Transverse colon (tissue), 4 donors: ENCODE measurements at regions of chr18 and their contacts with region 1.

Region 1: DNA sequence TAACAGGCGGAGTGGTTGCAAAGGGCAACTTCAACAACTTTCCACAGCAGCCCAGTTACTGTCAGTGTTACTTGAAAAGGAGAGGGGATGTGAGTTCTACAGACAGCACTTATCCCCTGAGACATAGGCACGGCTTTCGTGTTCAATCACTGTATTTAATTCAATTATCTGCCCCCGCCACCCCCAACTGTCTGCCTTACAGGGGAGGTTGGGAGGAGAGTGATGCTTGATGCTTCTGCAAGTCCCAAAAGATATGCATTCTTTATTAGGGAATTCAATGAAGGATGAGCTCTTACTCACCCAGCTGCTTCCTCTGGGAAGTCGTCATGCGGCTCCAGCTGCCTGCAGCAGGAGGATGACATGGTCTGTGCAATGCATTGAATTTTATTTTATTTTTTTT is 639.9 kb downstream of the DCC start:
- DNase-seq: no peak
- H3K4me3 ChIP-seq: no peak overlapping the region
- H3K27ac ChIP-seq: no peak overlapping the region
- H3K4me1 ChIP-seq: no peaks in the 10 kb centered on the region
- H3K27me3 ChIP-seq: no peaks in the 10 kb centered on the region
- CTCF ChIP-seq: no peak
- EP300 ChIP-seq: no peak
- POLR2A ChIP-seq: no peak

Region 2: GRCh38 chr18:52995875-52996274 is 16.0 kb after region 1 on chr18:
- in situ Hi-C with region 1: no loop called
- intact Hi-C with region 1: loop called (anchors 2 kb)
- DNase-seq: no peak
- H3K4me3 ChIP-seq: no peak overlapping the region
- H3K27ac ChIP-seq: no peak overlapping the region
- H3K4me1 ChIP-seq: no peaks in the 10 kb centered on the region
- H3K27me3 ChIP-seq: no peaks in the 10 kb centered on the region
- CTCF ChIP-seq: no peak
- EP300 ChIP-seq: no peak
- POLR2A ChIP-seq: no peak

Region 3: DNA sequence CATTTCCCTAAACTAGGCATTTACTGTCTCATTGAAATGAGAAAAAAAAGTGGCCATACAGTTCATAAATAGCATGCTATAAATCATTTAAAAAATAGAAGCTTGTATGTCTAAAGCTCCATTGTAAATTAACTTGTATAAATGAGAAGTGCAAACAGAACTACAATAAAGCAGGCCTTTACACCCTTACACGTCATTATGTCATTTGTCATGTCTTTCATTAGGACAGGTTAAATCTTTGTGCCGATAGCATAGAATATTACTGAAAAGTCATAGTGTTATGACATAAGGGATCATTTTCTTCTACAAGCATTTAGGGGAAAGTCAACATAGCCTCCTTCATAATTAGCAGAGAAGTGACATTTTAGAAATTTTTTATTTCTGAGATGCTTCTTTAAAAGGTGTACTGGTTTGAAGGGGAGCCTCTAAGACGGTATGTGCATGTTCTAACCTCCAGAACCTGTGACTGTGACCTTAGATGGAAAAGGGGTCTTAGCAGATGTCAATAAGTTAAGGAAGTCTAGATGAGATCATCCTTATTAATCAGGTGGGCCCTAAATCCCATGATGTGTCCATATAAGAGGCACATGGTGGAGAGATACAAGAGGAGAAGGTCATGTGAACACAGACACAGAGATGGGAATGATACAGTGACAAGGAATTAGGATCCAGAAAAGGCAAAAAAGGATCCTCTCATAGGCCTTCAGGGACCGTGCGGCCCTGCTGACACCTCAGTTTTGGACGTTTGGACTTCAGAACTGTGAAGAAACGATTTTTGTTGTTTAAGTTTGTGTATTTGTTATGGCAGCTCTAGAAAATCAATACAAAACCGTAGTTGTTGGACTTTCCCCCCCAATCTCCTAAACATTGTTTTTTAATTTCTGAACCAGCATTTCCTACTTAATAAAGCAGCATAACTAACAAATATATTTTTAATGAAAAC is 380.9 kb after region 1 on chr18:
- in situ Hi-C with region 1: no loop called
- intact Hi-C with region 1: no loop called
- DNase-seq: no peak
- H3K4me3 ChIP-seq: no peak overlapping the region
- H3K27ac ChIP-seq: no peak overlapping the region
- H3K4me1 ChIP-seq: no peaks in the 10 kb centered on the region
- H3K27me3 ChIP-seq: no peaks in the 10 kb centered on the region
- CTCF ChIP-seq: no peak
- EP300 ChIP-seq: no peak
- POLR2A ChIP-seq: no peak